Activated T-helper 2 cell treated with anti-CD3 and anti-CD28 coated beads, Interferon-gamma antibody, Interleukin-2, Interleukin-4, amounts not matched to agents 10 μg/mL and 5 μg/mL and 100 μg/mL, durations not matched to agents 14 hours and 24 hours and 36 hours (primary cell): ENCODE measurements at regions of chr2 and their contacts with region 1.

Region 1: DNA sequence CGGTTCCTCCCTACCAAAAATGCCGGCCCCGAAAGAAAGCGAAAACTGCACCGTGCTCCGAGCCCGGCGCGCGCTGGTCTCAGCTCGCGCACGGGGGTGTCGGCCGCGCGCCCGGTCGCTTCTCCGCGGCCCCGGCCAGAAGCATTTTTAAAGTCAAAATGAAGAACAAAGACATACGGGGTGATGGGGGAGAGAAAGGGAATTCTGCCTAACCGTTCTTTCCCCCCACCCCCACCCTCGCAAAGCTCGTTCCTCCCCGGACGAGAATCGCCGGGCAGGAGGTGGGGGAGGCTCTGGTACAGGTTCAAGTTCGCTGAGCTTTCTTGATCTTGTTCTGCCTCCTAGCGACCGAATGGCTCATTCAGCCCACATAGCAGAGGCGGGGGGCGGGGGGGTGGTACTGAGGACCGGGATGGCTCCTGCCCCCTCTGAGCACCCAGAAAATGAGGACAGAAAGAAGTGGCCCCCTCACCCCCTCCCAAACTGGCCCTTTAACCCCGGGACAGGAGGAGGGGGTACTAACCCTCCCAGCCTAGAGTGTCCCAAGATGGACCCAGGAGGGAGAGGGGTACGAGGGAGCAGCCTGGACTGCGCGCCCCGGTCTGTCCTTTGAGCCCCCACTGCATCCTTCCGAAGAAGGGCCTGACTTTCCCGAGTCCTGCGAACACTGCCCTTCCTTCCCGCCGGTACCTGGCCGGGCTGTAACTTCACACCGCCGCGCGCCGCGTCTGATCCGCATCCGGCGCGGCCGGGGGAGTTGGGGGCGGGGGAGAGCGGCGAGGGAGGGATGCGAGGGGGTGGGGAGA is 3.1 kb downstream of the BCL11A start:
- DNase-seq: no peak
- H3K4me3 Mint-ChIP-seq: peak overlapping the region; percentile 80
- H3K27ac Mint-ChIP-seq: no peak overlapping the region
- H3K4me1 Mint-ChIP-seq: peaks cover 21% of the 10 kb centered on the region
- H3K27me3 Mint-ChIP-seq: peaks cover 71% of the 10 kb centered on the region

Region 2: GRCh38 chr2:59025157-59025757 is 1525.1 kb before region 1 on chr2:
- intact Hi-C with region 1: loop called (anchors 10 kb)
- DNase-seq: no peak
- H3K4me3 Mint-ChIP-seq: no peak overlapping the region
- H3K27ac Mint-ChIP-seq: no peak overlapping the region
- H3K4me1 Mint-ChIP-seq: no peaks in the 10 kb centered on the region
- H3K27me3 Mint-ChIP-seq: no peaks in the 10 kb centered on the region

Region 3: DNA sequence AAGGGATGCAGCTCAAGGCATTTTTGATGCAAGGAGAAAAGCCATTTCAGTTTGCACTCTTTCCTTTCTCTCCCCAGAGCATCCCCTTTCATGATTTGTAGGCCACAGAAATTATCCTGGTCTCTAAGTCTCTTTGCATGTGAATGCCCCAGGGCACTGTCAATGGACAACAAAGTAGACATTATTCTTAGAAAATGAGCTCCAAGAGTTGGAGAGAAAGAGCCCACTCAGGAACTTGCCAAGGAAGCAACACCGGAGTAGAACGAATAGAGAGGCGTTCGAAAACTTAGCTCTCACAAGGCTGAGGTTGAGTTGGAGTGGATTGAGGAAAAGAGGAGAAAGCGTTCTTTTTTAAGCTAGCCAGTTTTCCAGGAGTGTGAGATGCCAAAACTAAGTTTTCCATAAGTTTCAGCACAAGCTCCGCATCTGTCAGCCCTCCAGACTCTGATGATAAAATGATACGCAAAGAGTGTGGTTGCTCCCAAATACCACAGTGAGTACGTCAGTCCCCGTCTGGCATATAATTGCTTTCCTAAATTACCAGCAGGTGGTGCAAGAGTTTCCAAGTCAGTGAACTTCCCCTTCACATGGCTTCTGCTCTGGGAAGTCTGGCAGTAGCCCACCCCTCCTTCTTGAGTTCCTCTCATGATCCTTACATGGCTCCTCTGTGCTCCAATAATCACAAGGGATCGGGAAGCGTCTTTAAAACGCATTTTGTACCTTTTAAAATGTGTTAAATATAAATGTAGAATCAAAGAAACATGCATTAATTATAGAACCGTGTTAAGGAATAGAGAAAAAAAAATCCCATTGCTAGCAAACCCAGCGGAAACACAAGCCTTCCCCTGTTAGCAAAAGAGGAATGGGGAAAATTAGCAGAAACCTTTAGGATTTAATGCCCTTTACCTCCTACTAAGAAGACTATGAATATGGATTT is 1248.6 kb before region 1 on chr2:
- intact Hi-C with region 1: loop called (anchors 5 kb)
- DNase-seq: no peak
- H3K4me3 Mint-ChIP-seq: no peak overlapping the region
- H3K27ac Mint-ChIP-seq: no peak overlapping the region
- H3K4me1 Mint-ChIP-seq: no peaks in the 10 kb centered on the region
- H3K27me3 Mint-ChIP-seq: no peaks in the 10 kb centered on the region

Region 4: GRCh38 chr2:59804732-59805131 is 745.6 kb before region 1 on chr2:
- intact Hi-C with region 1: no loop called
- DNase-seq: no peak
- H3K4me3 Mint-ChIP-seq: no peak overlapping the region
- H3K27ac Mint-ChIP-seq: no peak overlapping the region
- H3K4me1 Mint-ChIP-seq: no peaks in the 10 kb centered on the region
- H3K27me3 Mint-ChIP-seq: no peaks in the 10 kb centered on the region

Region 5: GRCh38 chr2:60535685-60536312 is 14.6 kb before region 1 on chr2:
- intact Hi-C with region 1: no loop called
- DNase-seq: no peak
- H3K4me3 Mint-ChIP-seq: no peak overlapping the region
- H3K27ac Mint-ChIP-seq: no peak overlapping the region
- H3K4me1 Mint-ChIP-seq: no peaks in the 10 kb centered on the region
- H3K27me3 Mint-ChIP-seq: peaks cover 55% of the 10 kb centered on the region

Region 6: GRCh38 chr2:60569680-60570111 is 19.3 kb after region 1 on chr2:
- intact Hi-C with region 1: loop called (anchors 2 kb)
- DNase-seq: no peak
- H3K4me3 Mint-ChIP-seq: no peak overlapping the region
- H3K27ac Mint-ChIP-seq: no peak overlapping the region
- H3K4me1 Mint-ChIP-seq: peaks cover 3% of the 10 kb centered on the region
- H3K27me3 Mint-ChIP-seq: peaks cover 46% of the 10 kb centered on the region